Prostate gland (tissue), 2 donors: ENCODE measurements at regions of chr1 and their contacts with region 1.

Region 1: GRCh38 chr1:91282695-91283420 is 121.8 kb downstream of the HFM1 start:
- DNase-seq: peak; percentile 54
- H3K4me3 ChIP-seq: no peak overlapping the region
- H3K27ac ChIP-seq: no peak overlapping the region
- H3K4me1 ChIP-seq: no peaks in the 10 kb centered on the region
- H3K27me3 ChIP-seq: no peaks in the 10 kb centered on the region
- CTCF ChIP-seq: peak; percentile 37 to 71 (median 70)
- POLR2A ChIP-seq: no peak

Region 2: DNA sequence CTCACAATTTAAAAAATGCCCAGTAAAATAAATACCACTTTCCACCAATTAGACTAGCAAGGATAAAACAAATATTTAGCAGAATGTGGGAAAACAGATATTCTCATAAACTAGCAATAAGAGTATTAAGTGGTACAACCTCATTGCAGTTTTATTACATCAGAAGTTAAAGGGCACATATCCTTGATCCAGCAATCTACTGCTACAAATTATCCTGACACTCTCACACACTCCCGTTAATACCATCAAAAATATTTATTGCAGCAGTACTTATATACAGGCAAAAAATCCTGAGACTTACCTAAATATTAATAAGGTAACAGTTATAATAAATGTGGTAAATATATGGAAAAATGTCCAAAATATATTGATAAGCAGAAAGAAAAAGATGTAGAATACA is 305.3 kb before region 1 on chr1:
- intact Hi-C with region 1: no loop called
- DNase-seq: no peak
- H3K4me3 ChIP-seq: no peak overlapping the region
- H3K27ac ChIP-seq: no peak overlapping the region
- H3K4me1 ChIP-seq: no peaks in the 10 kb centered on the region
- H3K27me3 ChIP-seq: no peaks in the 10 kb centered on the region
- CTCF ChIP-seq: no peak
- POLR2A ChIP-seq: no peak

Region 3: GRCh38 chr1:91404151-91405012 is 121.5 kb after region 1 on chr1 and contains the start of gene HFM1:
- intact Hi-C with region 1: loop called (anchors 5 kb)
- DNase-seq: peak; percentile 32
- H3K4me3 ChIP-seq: peak within 1 kb of the TSS; percentile 43 to 46
- H3K27ac ChIP-seq: peak within 1 kb of the TSS; percentile 61 to 64
- H3K4me1 ChIP-seq: no peaks in the 10 kb centered on the region
- H3K27me3 ChIP-seq: no peaks in the 10 kb centered on the region
- CTCF ChIP-seq: peak in 1 of 4 experiments; percentile 8
- POLR2A ChIP-seq: no peak
- total RNA-seq, gene HFM1: 0.18 to 4.8 TPM

Region 4: GRCh38 chr1:91937613-91938012 is 654.8 kb after region 1 on chr1:
- intact Hi-C with region 1: loop called (anchors 10 kb)
- DNase-seq: no peak
- H3K4me3 ChIP-seq: no peak overlapping the region
- H3K27ac ChIP-seq: no peak overlapping the region
- H3K4me1 ChIP-seq: no peaks in the 10 kb centered on the region
- H3K27me3 ChIP-seq: no peaks in the 10 kb centered on the region
- CTCF ChIP-seq: no peak
- POLR2A ChIP-seq: no peak